CD8-positive, alpha-beta T cell (primary cell): ENCODE measurements at regions of chr2 and their contacts with region 1.

Region 1: DNA sequence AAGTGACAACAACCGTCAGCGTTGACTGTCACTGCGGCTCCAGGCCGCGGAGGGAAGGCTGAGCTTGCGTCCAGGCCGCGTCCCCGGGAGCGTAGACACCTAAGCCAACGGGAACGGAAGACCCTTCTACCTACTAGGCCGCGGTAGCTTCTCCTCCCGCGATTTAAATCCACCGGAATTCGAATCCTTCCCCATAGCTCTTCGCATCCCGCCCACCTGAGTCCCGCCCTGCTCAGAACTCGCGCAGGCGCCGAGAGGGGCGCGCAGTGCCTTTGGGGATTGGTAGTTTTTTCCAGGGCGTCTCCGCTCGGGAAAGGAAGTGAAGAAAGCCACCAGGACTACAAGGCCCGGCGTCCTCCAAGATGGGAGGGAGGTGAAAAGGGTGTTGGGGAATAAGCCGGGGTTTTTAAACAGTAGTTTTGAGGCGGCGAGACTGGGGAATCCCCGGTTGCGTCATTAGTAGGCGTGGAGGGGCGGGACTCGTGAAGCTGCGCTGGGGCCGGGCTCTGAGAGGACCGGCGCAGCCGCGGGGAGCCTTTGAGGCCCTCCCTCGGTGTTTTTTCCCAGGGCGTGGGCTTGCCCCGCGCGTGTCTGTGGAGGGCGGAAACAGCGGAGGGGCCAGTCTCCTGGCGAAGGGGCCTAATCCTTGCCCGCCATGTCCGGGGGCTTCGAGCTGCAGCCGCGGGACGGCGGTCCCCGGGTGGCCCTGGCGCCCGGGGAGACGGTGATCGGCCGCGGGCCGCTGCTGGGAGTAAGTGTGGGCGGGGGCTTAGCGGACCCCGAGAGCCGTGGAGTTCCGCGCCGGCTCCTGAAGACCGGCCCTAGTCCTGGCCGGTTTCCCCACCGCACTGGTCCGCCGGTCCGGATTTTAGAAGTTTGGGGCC is at the starts of genes APLF and FBXO48:
- DNase-seq: peak; percentile 96 to 99 (median 98)
- ATAC-seq: peak; percentile 87
- H3K4me3 ChIP-seq: peak within 1 kb of the TSS; percentile 83 to 88
- H3K4me3 Mint-ChIP-seq: peak within 1 kb of the TSS; percentile 96
- H3K27ac ChIP-seq: peak within 1 kb of the TSS; percentile 82 to 89
- H3K27ac Mint-ChIP-seq: peak within 1 kb of the TSS; percentile 97
- H3K4me1 ChIP-seq: peaks cover 26% of the 10 kb centered on the region
- H3K4me1 Mint-ChIP-seq: peaks cover 44% of the 10 kb centered on the region
- H3K27me3 ChIP-seq: no peaks in the 10 kb centered on the region
- H3K27me3 Mint-ChIP-seq: no peaks in the 10 kb centered on the region
- CTCF ChIP-seq: no peak
- total RNA-seq, gene APLF: 4.1 to 4.2 TPM
- total RNA-seq, gene FBXO48: 0.22 to 0.30 TPM

Region 2: DNA sequence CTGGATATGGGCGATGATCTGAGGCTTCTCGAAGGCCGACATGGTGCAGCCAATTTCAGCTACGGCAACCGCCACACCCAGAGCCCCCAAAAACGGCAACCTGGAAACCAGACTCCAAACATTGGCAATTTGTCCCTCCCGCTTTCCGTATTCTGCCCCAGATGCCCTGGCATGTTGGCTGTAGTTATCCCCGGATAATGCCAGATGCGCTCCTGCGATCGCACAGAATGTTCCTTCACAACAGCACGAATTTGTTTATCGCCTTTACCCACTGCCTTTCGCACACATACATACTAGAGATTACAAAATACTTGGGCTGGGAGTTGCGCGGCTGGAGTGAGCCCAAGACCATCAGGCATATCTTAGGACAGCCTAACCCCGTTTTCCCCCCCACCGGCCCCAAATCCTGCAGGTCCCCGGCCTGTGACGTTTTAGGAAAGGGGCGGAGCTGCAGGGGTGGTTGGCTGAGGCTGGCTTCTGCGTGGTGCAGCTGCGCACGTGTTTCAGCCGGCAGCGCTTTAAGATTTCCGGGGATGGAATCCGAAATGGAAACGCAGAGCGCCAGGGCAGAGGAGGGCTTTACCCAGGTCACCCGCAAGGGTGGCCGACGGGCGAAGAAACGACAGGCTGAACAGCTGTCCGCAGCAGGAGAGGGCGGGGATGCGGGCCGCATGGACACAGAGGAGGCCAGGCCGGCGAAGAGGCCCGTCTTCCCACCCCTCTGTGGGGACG is 309.8 kb before region 1 on chr2 and contains the start of gene PNO1:
- CTCF ChIA-PET with region 1: interaction called, 3 read pairs
- POLR2A ChIA-PET with region 1: interaction called, 3 read pairs
- intact Hi-C with region 1: loop called (anchors 1 to 2 kb)
- DNase-seq: peak; percentile 95 to 98 (median 97)
- ATAC-seq: peak; percentile 95
- H3K4me3 ChIP-seq: peak within 1 kb of the TSS; percentile 66 to 73
- H3K4me3 Mint-ChIP-seq: peak within 1 kb of the TSS; percentile 97
- H3K27ac ChIP-seq: peak within 1 kb of the TSS; percentile 90 to 94
- H3K27ac Mint-ChIP-seq: peak within 1 kb of the TSS; percentile 100
- H3K4me1 ChIP-seq: peaks cover 34% of the 10 kb centered on the region
- H3K4me1 Mint-ChIP-seq: peaks cover 52% of the 10 kb centered on the region
- H3K27me3 ChIP-seq: no peaks in the 10 kb centered on the region
- H3K27me3 Mint-ChIP-seq: no peaks in the 10 kb centered on the region
- CTCF ChIP-seq: no peak
- total RNA-seq, gene PNO1: 35.3 to 36.0 TPM

Region 3: DNA sequence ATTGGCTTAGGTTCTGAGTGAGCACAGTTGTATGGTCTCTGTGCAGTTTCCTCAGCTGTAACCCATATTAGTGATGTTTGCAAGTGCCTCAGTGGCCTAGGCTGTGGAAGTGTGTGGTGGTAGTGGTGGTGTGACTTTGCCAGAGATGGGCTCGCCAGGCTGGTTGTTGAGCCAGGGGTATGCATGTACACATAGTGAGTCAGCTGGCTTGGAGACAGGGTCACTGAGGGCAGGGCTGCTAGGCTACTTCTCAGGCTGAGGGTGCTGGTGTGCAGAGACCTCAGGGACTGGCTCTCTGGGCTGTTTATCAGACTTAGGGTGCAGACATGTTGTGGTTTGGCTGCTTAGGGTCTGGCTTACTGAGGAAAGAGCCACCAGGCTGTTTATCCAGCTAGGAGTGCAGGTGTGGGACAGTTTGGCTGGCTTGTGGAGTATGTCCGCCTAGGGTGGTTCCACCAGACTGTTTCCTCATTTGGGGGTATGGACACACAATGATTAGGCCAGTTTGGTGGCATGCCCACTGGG is 15.0 kb after region 1 on chr2:
- CTCF ChIA-PET with region 1: interaction called, 33 read pairs
- POLR2A ChIA-PET with region 1: no interaction called
- intact Hi-C with region 1: loop called (anchors 1 kb)
- DNase-seq: no peak
- ATAC-seq: no peak
- H3K4me3 ChIP-seq: no peak overlapping the region
- H3K4me3 Mint-ChIP-seq: no peak overlapping the region
- H3K27ac ChIP-seq: no peak overlapping the region
- H3K27ac Mint-ChIP-seq: no peak overlapping the region
- H3K4me1 ChIP-seq: no peaks in the 10 kb centered on the region
- H3K4me1 Mint-ChIP-seq: no peaks in the 10 kb centered on the region
- H3K27me3 ChIP-seq: no peaks in the 10 kb centered on the region
- H3K27me3 Mint-ChIP-seq: no peaks in the 10 kb centered on the region
- CTCF ChIP-seq: no peak

Region 4: GRCh38 chr2:68709421-68709911 is 242.1 kb after region 1 on chr2:
- CTCF ChIA-PET with region 1: interaction called, 18 read pairs
- POLR2A ChIA-PET with region 1: interaction called, 3 read pairs
- intact Hi-C with region 1: loop called (anchors 2 kb)
- DNase-seq: peak in 2 of 9 experiments; percentile 50 to 62
- ATAC-seq: peak; percentile 58
- H3K4me3 ChIP-seq: no peak overlapping the region
- H3K4me3 Mint-ChIP-seq: no peak overlapping the region
- H3K27ac ChIP-seq: no peak overlapping the region
- H3K27ac Mint-ChIP-seq: no peak overlapping the region
- H3K4me1 ChIP-seq: no peaks in the 10 kb centered on the region
- H3K4me1 Mint-ChIP-seq: peaks cover 8% of the 10 kb centered on the region
- H3K27me3 ChIP-seq: no peaks in the 10 kb centered on the region
- H3K27me3 Mint-ChIP-seq: no peaks in the 10 kb centered on the region
- CTCF ChIP-seq: peak; percentile 76

Region 5: GRCh38 chr2:68734688-68735525 is 267.6 kb after region 1 on chr2 and contains the start of gene ARHGAP25:
- CTCF ChIA-PET with region 1: no interaction called
- POLR2A ChIA-PET with region 1: interaction called, 9 read pairs
- intact Hi-C with region 1: loop called in 1 of 2 experiments (anchors 5 kb)
- DNase-seq: peak in 7 of 9 experiments; percentile 25 to 83 (median 61)
- ATAC-seq: peak; percentile 65
- H3K4me3 ChIP-seq: peak within 1 kb of the TSS; percentile 61 to 84
- H3K4me3 Mint-ChIP-seq: no peak within 1 kb of the TSS
- H3K27ac ChIP-seq: peak within 1 kb of the TSS; percentile 62 to 81
- H3K27ac Mint-ChIP-seq: no peak within 1 kb of the TSS
- H3K4me1 ChIP-seq: peaks cover 41% of the 10 kb centered on the region
- H3K4me1 Mint-ChIP-seq: peaks cover 38% of the 10 kb centered on the region
- H3K27me3 ChIP-seq: no peaks in the 10 kb centered on the region
- H3K27me3 Mint-ChIP-seq: no peaks in the 10 kb centered on the region
- CTCF ChIP-seq: no peak
- total RNA-seq, gene ARHGAP25: 35.8 to 36.7 TPM

Region 6: DNA sequence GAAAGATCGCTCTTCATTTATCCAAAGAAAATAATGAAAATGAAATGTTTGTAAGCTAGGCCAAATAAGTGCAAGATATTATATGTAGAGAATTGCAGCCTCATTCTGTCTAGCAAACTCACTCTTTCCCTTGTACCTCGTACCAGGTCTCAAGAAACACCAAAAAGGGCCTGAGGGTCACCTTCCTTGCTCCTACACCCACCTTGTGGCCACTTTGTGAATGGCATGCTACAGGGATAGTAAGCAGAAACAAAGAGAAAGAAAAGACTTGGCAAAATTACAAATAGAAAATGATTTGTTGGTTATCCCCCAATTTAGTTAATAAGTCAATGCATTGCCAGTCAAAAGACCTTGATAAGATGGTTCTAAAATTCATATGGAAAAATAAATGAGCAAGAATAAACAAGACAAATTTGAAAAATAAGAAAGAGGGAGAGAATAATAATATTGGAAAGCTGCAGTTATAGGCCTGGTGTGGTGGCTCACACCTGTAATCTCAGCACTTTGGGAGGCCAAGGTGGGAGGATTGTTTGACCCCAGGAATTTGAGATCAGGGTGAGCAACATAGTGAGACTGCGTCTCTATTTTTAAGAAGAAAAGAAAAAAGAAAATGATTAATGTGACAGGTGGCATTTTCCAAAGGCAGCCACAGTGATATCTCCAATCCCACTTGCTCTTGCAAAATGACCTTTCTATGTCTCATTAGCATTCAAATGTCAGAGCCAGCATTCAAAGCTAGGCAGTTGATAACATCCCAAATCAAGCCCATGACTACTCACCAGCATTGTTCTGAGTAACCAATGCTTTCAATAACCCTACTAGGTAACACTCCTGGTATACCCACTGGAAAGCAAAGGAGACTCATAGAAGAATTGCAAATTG is 442.7 kb after region 1 on chr2:
- CTCF ChIA-PET with region 1: interaction called, 22 read pairs
- POLR2A ChIA-PET with region 1: interaction called, 8 read pairs
- intact Hi-C with region 1: loop called (anchors 1 kb)
- DNase-seq: peak; percentile 36 to 82 (median 70)
- ATAC-seq: peak; percentile 21
- H3K4me3 ChIP-seq: no peak overlapping the region
- H3K4me3 Mint-ChIP-seq: no peak overlapping the region
- H3K27ac ChIP-seq: no peak overlapping the region
- H3K27ac Mint-ChIP-seq: peak overlapping the region; percentile 42
- H3K4me1 ChIP-seq: peaks cover 34% of the 10 kb centered on the region
- H3K4me1 Mint-ChIP-seq: peaks cover 34% of the 10 kb centered on the region
- H3K27me3 ChIP-seq: no peaks in the 10 kb centered on the region
- H3K27me3 Mint-ChIP-seq: no peaks in the 10 kb centered on the region
- CTCF ChIP-seq: peak; percentile 98

Region 7: GRCh38 chr2:69306822-69307578 is 839.7 kb after region 1 on chr2:
- CTCF ChIA-PET with region 1: interaction called, 5 read pairs
- POLR2A ChIA-PET with region 1: no interaction called
- intact Hi-C with region 1: loop called (anchors 1 to 5 kb)
- DNase-seq: peak; percentile 36 to 81 (median 68)
- ATAC-seq: peak; percentile 89
- H3K4me3 ChIP-seq: peak overlapping the region; percentile 49 to 58
- H3K4me3 Mint-ChIP-seq: peak overlapping the region; percentile 79
- H3K27ac ChIP-seq: no peak overlapping the region
- H3K27ac Mint-ChIP-seq: no peak overlapping the region
- H3K4me1 ChIP-seq: peaks cover 13% of the 10 kb centered on the region
- H3K4me1 Mint-ChIP-seq: peaks cover 21% of the 10 kb centered on the region
- H3K27me3 ChIP-seq: peaks cover 4 to 15% of the 10 kb centered on the region in 2 experiments
- H3K27me3 Mint-ChIP-seq: peaks cover 22% of the 10 kb centered on the region
- CTCF ChIP-seq: peak; percentile 78